A549 (cell line): ENCODE measurements at regions of chr10 and their contacts with region 1.

Region 1: DNA sequence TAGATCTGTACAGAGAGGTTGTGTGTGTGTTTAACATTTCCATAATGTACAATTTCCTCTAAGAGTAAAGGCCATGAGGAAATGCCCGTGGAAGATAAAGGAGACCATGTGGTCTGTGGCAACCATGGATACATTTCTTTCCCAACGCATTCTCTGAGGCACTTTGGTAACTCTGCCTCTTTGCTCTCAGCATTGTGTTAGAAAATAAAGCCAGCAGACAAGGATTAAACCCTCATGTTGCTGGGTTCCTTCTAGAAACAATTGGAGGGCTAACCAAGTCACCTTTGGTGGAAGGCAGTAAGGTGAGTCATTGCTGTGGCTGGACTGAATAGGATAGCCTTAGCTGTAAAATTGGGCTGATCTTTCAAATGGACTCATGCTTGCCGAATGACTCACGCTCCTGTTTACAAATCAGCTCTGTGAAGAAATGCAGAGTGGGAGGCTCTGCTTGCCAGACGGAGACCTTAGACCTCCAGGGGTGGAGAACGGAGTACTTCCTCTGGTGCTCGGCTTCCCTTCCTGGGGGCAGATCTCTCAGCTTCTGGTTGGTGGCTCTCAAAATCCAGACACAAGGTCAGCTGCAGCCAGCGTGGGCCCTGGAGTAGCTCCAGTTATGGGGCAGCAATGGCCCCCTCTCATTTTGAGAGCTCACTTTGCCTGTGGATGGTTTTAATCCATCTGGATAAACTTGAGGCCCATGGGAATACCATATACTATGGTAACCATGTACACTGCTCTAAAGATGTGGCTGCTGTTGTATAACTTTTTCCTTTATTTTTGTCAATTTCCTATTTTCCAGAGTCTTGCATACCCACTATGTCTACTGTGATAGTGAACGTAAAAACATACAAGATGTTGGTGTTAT is 137.3 kb downstream of the TCF7L2 start:
- DNase-seq: peak; percentile 97 to 98
- ATAC-seq: peak; percentile 95
- H3K4me3 ChIP-seq: no peak overlapping the region
- H3K27ac ChIP-seq: peak overlapping the region; percentile 88 to 92
- H3K4me1 ChIP-seq: peaks cover 80% of the 10 kb centered on the region
- CTCF ChIP-seq: no peak
- EP300 ChIP-seq: peak; percentile 89 to 92
- POLR2A ChIP-seq: no peak
- RAD21 ChIP-seq: peak; percentile 34 to 63

Region 2: GRCh38 chr10:112949875-112950507 is 137.4 kb before region 1 on chr10 and contains the start of gene TCF7L2:
- CTCF ChIA-PET with region 1: interaction called, 3 read pairs
- POLR2A ChIA-PET with region 1: interaction called, 12 read pairs
- DNase-seq: peak; percentile 94 to 98
- ATAC-seq: peak; percentile 70 to 88
- H3K4me3 ChIP-seq: peak within 1 kb of the TSS; percentile 84
- H3K27ac ChIP-seq: peak within 1 kb of the TSS; percentile 98 to 99
- H3K4me1 ChIP-seq: peaks cover 27% of the 10 kb centered on the region
- CTCF ChIP-seq: no peak
- EP300 ChIP-seq: no peak
- POLR2A ChIP-seq: no peak
- RAD21 ChIP-seq: peak; percentile 13 to 48; a peak in 4 of 5 replicates
- polyA plus RNA-seq, gene TCF7L2: 11.3 and 15.8 TPM in 2 replicates